Activated CD4-positive, alpha-beta T cell treated with anti-CD3 and anti-CD28 coated beads, Interleukin-2, amount 10 ng/mL, durations not matched to agents 24 days and 14 days (primary cell): ENCODE measurements at regions of chr11 and their contacts with region 1.

Region 1: GRCh38 chr11:82959987-82960778 is 58.6 kb downstream of the DDIAS start:
- DNase-seq: peak; percentile 86
- H3K4me3 Mint-ChIP-seq: peak overlapping the region; percentile 62
- H3K27ac Mint-ChIP-seq: peak overlapping the region; percentile 62
- H3K4me1 Mint-ChIP-seq: peaks cover 51% of the 10 kb centered on the region
- H3K27me3 Mint-ChIP-seq: peaks cover 2% of the 10 kb centered on the region

Region 2: DNA sequence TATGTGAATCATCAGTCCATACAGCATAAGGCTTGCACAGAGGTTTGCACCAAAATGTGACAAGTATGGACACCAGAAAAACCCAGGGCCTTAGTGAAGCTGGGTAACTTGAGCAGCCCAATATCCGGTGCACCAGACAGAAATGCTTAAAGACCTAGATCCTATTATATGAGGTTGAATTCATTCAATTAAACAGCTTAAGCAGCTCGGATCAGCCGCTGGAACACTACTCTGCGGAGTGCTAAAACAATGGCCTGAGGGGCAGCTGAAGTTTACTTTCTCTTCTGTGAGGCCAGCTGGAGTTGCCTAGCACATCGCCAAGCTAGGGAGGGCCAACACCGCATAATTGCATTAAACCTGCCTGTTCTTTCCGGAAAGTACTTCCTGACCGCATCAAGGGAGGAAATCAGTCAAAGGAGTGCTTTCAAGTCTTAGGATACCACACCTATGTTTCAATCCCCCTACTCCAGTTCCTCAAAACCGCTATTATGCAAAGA is 209.5 kb before region 1 on chr11:
- intact Hi-C with region 1: no loop called
- DNase-seq: peak; percentile 77
- H3K4me3 Mint-ChIP-seq: peak overlapping the region; percentile 62
- H3K27ac Mint-ChIP-seq: no peak overlapping the region
- H3K4me1 Mint-ChIP-seq: peaks cover 14% of the 10 kb centered on the region
- H3K27me3 Mint-ChIP-seq: peaks cover 36% of the 10 kb centered on the region

Region 3: GRCh38 chr11:82978422-82979099 is 18.4 kb after region 1 on chr11:
- intact Hi-C with region 1: loop called (anchors 1 kb)
- DNase-seq: peak; percentile 66
- H3K4me3 Mint-ChIP-seq: peak overlapping the region; percentile 30
- H3K27ac Mint-ChIP-seq: peak overlapping the region; percentile 25
- H3K4me1 Mint-ChIP-seq: peaks cover 27% of the 10 kb centered on the region
- H3K27me3 Mint-ChIP-seq: peaks cover 7% of the 10 kb centered on the region

Region 4: GRCh38 chr11:83051760-83052671 is 91.8 kb after region 1 on chr11:
- intact Hi-C with region 1: no loop called
- DNase-seq: no peak
- H3K4me3 Mint-ChIP-seq: no peak overlapping the region
- H3K27ac Mint-ChIP-seq: peak overlapping the region; percentile 16
- H3K4me1 Mint-ChIP-seq: peaks cover 44% of the 10 kb centered on the region
- H3K27me3 Mint-ChIP-seq: no peaks in the 10 kb centered on the region

Region 5: DNA sequence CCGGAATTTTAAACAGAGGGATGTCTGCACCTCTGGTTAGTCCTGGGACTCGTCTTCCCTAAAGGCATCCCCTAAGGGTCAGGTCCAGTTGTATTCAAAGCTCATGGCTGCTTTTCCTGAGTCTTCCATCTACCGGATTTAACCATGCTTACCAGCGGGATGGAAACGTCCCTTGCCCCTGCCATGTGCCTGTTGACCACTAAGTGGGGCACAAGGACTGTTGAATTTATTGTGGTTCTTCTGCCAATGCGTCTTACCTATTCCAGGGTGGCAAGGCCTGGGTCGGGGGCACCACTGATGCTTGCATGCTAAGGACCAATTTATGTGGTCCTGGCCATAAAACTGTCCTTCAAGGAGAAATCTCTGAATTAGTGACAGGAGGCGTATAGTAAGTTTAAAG is 258.9 kb after region 1 on chr11:
- intact Hi-C with region 1: no loop called
- DNase-seq: peak; percentile 47
- H3K4me3 Mint-ChIP-seq: no peak overlapping the region
- H3K27ac Mint-ChIP-seq: no peak overlapping the region
- H3K4me1 Mint-ChIP-seq: no peaks in the 10 kb centered on the region
- H3K27me3 Mint-ChIP-seq: peaks cover 11% of the 10 kb centered on the region

Region 6: DNA sequence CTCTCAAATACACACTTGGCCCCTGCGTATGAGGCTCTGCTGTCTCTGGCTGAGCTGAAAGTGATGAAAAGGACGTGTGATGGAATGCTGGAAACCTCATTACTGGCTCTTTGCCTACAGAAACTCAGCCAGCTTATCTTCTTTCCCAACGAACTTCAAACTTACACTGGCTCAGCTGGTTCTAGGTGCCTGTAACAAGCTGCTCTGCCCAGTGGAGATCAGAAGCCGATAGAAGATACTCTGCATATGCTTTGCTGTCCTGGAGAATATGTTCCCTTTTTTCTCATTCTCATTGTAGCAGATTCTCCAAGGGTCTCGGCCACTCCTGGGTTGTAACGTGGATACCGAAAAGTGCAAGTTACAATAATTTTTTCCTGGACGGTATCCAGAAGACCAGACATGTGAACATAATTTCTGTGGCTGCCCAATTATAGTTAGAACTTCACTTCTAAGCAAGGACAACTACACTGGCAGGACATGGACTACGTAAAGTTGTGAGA is 731.3 kb after region 1 on chr11:
- intact Hi-C with region 1: no loop called
- DNase-seq: no peak
- H3K4me3 Mint-ChIP-seq: no peak overlapping the region
- H3K27ac Mint-ChIP-seq: no peak overlapping the region
- H3K4me1 Mint-ChIP-seq: no peaks in the 10 kb centered on the region
- H3K27me3 Mint-ChIP-seq: no peaks in the 10 kb centered on the region